Motor neuron (in vitro differentiated cells): ENCODE measurements at regions of chr7 and their contacts with region 1.

Region 1: DNA sequence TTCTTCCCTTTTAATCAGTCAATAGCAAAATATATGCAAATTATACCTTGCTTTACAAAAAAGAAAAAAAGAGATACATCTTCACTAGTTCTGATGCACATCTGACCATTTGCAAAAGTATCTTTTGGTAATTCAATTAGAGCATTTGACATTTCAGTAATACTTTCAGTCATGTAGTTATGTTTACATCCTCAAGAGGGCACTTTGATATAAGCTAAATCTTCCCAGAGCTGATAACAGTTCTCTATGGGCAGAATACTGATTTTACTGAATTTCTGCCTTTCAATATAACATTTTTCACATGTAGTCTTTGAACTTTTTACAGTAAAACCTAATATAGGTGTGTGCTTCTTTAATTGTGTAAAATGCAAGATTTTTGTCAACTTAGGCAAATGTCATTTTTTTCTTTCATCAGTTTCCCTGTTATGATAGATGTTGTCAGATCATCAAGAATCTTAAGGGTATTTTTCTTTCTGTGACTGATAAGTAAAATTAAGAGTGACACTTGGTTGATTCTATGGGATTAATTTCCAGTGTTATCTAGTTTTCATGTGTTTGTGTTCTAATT is 703.5 kb upstream of the SEMA3D start:
- ATAC-seq: peak in 5 of 8 experiments; percentile 24 to 64 (median 47)
- H3K4me3 ChIP-seq: no peak overlapping the region
- H3K27ac ChIP-seq: no peak overlapping the region
- H3K4me1 ChIP-seq: no peaks in the 10 kb centered on the region

Region 2: GRCh38 chr7:86469680-86470295 is 579.5 kb after region 1 on chr7:
- in situ Hi-C with region 1: loop called in 4 of 9 experiments (anchors 10 to 25 kb)
- ATAC-seq: peak in 7 of 8 experiments; percentile 38 to 97 (median 78)
- H3K4me3 ChIP-seq: no peak overlapping the region
- H3K27ac ChIP-seq: no peak overlapping the region
- H3K4me1 ChIP-seq: peaks cover 0 to 2% of the 10 kb centered on the region in 2 donors

Region 3: GRCh38 chr7:86814661-86815379 is 924.5 kb after region 1 on chr7:
- in situ Hi-C with region 1: loop called in 1 of 9 experiments (anchors 25 kb)
- ATAC-seq: peak in 3 of 8 experiments; percentile 27 to 49 (median 29)
- H3K4me3 ChIP-seq: no peak overlapping the region
- H3K27ac ChIP-seq: no peak overlapping the region
- H3K4me1 ChIP-seq: peaks cover 0 to 5% of the 10 kb centered on the region in 2 donors

Region 4: GRCh38 chr7:86904949-86905834 is 1014.9 kb after region 1 on chr7:
- in situ Hi-C with region 1: loop called in 3 of 9 experiments (anchors 25 kb)
- ATAC-seq: peak in 3 of 8 experiments; percentile 42 to 56 (median 50)
- H3K4me3 ChIP-seq: no peak overlapping the region
- H3K27ac ChIP-seq: no peak overlapping the region
- H3K4me1 ChIP-seq: no peaks in the 10 kb centered on the region

Region 5: DNA sequence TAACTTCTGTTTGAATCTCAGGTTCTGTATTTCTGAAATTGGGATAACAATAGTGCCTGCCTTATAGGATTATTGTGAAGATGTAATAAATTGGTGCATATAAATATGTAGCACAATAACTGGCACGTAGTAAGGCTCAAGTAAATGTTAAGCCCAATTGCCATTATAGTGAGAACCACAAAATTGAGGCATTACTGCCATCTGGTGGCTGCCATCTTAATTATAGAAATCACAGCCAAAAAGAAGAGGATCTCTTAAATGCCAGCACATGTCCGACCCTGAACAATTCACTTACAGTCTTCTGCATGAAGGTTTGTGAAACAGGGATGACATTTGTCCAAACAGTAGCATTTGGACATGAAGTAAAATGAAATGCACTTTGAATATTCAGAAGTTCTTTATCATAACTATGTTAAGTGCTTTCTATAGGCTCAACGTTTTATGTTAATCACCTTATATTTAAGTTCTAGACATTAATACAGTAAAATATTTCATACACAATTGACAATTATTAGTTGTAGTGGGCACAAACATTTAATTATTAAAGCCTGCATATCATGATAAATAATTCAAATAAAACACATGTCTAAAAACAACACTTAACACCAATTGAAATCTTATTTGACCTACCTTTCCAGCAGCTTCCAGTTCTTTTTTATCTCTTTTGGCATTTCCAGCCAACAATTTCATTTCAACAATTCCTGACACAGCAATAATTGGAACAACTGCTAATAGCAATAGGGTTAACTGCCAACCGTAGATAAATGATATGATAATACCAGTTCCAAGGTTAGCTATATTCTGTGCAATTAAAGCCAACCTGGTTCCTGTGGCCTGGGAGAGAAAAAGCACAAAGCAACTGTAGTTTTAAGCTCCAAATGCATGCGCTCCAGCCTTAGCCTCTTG is 1526.6 kb after region 1 on chr7:
- in situ Hi-C with region 1: loop called in 1 of 9 experiments (anchors 25 kb)
- ATAC-seq: peak in 7 of 8 experiments; percentile 35 to 74 (median 55)
- H3K4me3 ChIP-seq: no peak overlapping the region
- H3K27ac ChIP-seq: no peak overlapping the region
- H3K4me1 ChIP-seq: no peaks in the 10 kb centered on the region